Heart right ventricle (tissue), 16 donors: ENCODE measurements at regions of chr2 and their contacts with region 1.

Region 1: DNA sequence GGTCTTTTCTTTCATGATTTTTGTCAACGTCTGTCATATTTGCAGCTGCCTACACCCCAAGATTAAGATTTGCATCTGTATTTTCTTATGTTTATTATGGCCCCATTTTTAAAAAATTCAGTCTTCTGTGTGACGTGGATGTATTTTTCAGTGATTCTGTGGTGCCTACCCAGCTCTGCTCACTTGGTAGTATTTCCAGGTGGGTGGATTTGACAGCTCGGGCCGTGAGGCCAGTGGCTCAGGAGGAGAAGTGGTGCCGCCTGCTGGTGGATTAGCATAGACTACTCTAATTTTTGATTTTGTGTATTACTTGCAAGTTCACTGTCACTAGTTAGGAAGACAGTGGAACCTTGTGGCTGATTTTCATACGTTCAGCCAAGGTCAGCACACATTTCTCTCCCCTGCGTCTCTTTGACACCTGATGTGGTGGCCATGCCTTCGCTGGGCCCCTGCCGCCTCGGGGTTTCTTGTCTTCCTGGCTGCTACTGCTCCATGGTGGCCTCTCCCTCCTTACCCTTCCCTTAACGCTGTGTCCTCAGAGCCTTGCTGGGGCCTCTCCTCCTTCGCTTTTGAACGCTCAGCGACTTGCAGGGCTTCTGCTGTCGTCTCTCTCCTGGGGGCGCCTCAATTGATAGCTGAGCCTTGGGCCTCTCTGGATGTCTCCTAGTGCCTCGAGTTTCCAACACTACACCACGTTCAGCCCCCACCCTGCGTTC is 89.3 kb downstream of the DGKD start:
- DNase-seq: peak; percentile 78 to 84
- ATAC-seq: peak in 7 of 8 donors; percentile 54 to 80 (median 63)
- H3K4me3 ChIP-seq: no peak overlapping the region
- H3K27ac ChIP-seq: peak overlapping the region in 1 of 10 donors; percentile 17
- H3K4me1 ChIP-seq: peaks cover 0 to 38% (median 12%) of the 10 kb centered on the region in 9 donors
- H3K27me3 ChIP-seq: no peaks in the 10 kb centered on the region
- CTCF ChIP-seq: peak; percentile 61 to 89 (median 82)

Region 2: DNA sequence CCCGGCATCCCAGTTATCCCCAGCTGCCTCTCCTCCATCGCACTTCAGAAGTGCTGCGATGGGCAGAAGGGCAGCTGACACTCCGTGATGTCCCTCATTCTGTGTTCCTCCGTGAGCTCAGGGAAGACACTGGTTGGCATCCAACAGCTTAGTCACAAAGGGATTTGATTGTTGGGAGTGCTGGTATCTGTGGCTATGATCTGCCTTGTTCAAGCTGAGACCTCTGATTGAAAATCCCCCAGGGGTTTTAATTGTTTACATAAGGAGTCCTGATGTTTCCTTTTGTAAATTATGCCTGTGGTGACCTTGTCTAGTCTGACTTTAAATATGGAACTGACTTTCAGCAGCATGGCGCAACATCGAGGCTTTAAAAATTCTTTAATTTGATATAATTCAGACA is 154.9 kb before region 1 on chr2:
- intact Hi-C with region 1: loop called in 2 of 10 experiments (anchors 10 kb)
- DNase-seq: no peak
- ATAC-seq: no peak
- H3K4me3 ChIP-seq: no peak overlapping the region
- H3K27ac ChIP-seq: no peak overlapping the region
- H3K4me1 ChIP-seq: peaks cover 0 to 7% (median 0%) of the 10 kb centered on the region in 9 donors
- H3K27me3 ChIP-seq: no peaks in the 10 kb centered on the region
- CTCF ChIP-seq: no peak

Region 3: DNA sequence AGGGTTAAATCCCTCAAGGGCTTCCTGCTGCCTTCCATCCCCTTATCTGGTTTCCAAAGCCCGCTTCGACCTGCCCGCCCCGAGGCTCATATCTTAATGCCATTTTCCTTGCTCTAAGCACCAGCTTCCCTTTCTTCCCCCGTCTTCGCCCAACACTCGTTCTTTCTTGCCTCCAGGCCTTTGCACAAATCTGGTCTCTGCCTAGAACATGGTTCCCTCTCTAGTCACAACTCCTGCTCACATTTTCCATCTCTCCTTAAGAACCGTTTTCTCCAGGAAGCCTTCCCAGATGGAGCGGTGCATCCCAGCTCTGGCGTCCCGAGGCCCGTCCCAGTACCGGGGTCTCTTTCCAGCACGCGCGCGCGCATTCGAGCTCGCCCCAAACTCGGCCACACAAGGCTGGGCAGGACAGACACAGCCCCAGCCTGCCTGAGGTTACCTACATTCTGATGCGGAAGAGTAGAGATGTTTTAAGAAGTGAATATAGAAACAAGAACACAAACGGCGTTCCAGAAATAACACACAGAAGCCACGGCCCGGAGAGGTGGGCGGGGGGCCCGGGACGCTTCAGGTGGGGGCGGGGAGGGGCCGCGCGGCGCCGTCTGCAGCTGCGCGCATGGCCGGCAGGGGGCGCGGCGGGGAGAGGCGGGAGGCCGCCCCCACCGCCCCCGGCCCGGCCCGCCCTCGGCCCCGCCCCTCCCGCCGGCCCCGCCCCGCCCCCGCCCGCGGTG is 89.7 kb before region 1 on chr2 and contains the start of gene DGKD:
- intact Hi-C with region 1: loop called (anchors 2 to 10 kb)
- DNase-seq: peak; percentile 40 to 75
- ATAC-seq: peak; percentile 71 to 91 (median 80)
- H3K4me3 ChIP-seq: peak within 1 kb of the TSS; percentile 54 to 83 (median 72)
- H3K27ac ChIP-seq: peak within 1 kb of the TSS in 6 of 10 donors; percentile 41 to 83 (median 56)
- H3K4me1 ChIP-seq: peaks cover 0 to 79% (median 20%) of the 10 kb centered on the region in 9 donors
- H3K27me3 ChIP-seq: no peaks in the 10 kb centered on the region
- CTCF ChIP-seq: peak in 6 of 9 donors; percentile 18 to 50 (median 30)
- total RNA-seq, gene DGKD: 26.8 to 79.5 (median 44.7) TPM

Region 4: DNA sequence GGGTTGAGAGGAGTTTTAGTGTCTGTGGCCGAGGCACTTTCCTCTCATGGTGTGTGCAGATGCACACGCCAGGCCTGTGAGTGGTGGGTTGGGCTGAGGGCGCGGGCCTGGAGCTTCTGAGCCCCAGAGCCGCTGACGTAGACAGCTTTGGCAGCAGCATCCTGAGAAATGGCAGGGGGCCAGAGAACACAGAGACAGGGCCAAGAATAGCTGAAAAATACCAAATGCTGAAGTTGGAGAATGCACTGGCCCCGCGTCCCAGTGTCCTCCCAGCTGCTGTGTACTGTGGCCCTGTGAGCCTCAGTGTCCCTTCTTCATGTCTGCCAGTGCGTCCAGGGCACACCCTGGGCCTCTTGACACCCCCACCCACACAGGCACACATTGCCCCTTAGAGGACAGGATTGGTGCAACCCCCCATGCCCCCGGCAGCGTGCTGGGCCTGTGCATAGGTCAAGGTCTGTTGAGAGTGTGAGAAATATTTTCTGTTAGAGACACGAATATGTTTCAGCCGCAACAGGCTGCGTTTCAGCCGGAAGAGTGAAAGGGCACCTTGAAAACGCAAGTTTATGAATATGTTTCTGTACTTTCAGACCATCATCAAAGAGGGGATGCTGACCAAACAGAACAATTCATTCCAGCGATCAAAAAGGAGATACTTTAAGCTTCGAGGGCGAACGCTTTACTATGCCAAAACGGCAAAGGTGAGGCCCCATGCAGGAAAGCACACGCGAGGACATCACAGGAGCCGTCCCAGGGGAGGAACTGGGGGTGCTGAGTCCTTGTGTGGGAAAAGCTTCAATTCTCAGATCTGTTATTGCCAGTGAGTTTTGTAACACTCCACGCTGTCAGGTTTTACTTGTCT is 55.7 kb before region 1 on chr2:
- intact Hi-C with region 1: loop called in 1 of 10 experiments (anchors 5 kb)
- DNase-seq: peak; percentile 90 to 95
- ATAC-seq: peak; percentile 94 to 97 (median 96)
- H3K4me3 ChIP-seq: peak overlapping the region in 7 of 10 donors; percentile 2 to 25 (median 16)
- H3K27ac ChIP-seq: peak overlapping the region; percentile 73 to 92 (median 84)
- H3K4me1 ChIP-seq: peaks cover 17 to 61% (median 49%) of the 10 kb centered on the region in 9 donors
- H3K27me3 ChIP-seq: no peaks in the 10 kb centered on the region
- CTCF ChIP-seq: no peak

Region 5: GRCh38 chr2:233404222-233404621 is 39.4 kb before region 1 on chr2:
- intact Hi-C with region 1: loop called (anchors 1 to 5 kb)
- DNase-seq: no peak
- ATAC-seq: peak in 3 of 8 donors; percentile 57 to 70 (median 63)
- H3K4me3 ChIP-seq: no peak overlapping the region
- H3K27ac ChIP-seq: no peak overlapping the region
- H3K4me1 ChIP-seq: peaks cover 0 to 25% (median 9%) of the 10 kb centered on the region in 9 donors
- H3K27me3 ChIP-seq: no peaks in the 10 kb centered on the region
- CTCF ChIP-seq: peak; percentile 32 to 80 (median 66)

Region 6: GRCh38 chr2:233409286-233409991 is 34.2 kb before region 1 on chr2:
- intact Hi-C with region 1: loop called in 9 of 10 experiments (anchors 1 to 5 kb)
- DNase-seq: no peak
- ATAC-seq: peak in 6 of 8 donors; percentile 37 to 81 (median 68)
- H3K4me3 ChIP-seq: no peak overlapping the region
- H3K27ac ChIP-seq: peak overlapping the region in 7 of 10 donors; percentile 36 to 76 (median 58)
- H3K4me1 ChIP-seq: peaks cover 0 to 52% (median 38%) of the 10 kb centered on the region in 9 donors
- H3K27me3 ChIP-seq: no peaks in the 10 kb centered on the region
- CTCF ChIP-seq: no peak

Region 7: GRCh38 chr2:233572468-233572867 is 128.8 kb after region 1 on chr2:
- intact Hi-C with region 1: no loop called
- DNase-seq: no peak
- ATAC-seq: no peak
- H3K4me3 ChIP-seq: no peak overlapping the region
- H3K27ac ChIP-seq: no peak overlapping the region
- H3K4me1 ChIP-seq: no peaks in the 10 kb centered on the region
- H3K27me3 ChIP-seq: peaks cover 0 to 11% (median 0%) of the 10 kb centered on the region in 7 donors
- CTCF ChIP-seq: no peak